ENCODE measurements at regions of chr20 and their contacts with region 1.

Region 1: GRCh38 chr20:50308513-50309279 is 118.1 kb downstream of the CEBPB start:
- DNase-seq: peak in 1 of 2 donors; percentile 98
- H3K4me3 ChIP-seq: no peak overlapping the region
- H3K27ac ChIP-seq: peak overlapping the region; percentile 91
- H3K4me1 ChIP-seq: peaks cover 76% of the 10 kb centered on the region
- H3K27me3 ChIP-seq: no peaks in the 10 kb centered on the region
- CTCF ChIP-seq: peak in 1 of 3 experiments; percentile 20
- POLR2A ChIP-seq: peak in 1 of 2 donors; percentile 74

Region 2: DNA sequence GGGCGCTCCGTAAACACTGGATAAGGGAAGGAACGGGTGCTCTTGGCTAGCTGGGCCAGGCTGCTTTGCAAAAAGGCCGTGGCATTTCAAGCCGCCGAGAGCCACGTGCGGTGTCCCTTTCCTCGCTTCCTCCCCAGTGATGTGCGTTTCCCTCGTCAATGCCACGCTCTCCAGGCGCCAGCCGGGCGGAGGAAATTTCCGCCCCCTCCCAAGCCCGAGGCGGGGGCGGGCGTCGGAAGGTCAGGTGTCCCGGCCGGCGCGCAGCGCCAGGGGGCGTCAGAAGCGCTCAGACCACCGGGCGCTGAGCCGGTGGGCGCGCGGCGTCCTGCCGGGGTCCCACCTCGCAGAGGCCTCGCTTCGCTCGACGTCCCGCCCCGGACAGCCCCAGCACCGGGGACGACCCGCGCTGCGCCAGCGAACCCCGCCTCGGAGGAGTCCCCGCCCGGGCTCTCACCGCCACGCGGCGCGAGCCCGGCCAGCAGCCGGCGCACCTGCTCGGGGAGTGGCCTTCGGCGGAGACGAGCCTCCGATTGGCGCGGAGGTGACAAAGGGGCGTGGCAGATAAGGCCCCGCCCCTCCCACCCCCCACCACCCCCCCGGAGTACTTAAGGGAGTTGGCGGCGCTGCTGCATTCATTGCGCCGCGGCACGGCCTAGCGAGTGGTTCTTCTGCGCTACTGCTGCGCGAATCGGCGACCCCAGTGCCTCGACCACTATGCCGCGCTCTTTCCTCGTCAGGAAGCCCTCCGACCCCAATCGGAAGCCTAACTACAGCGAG is 326.2 kb before region 1 on chr20 and contains the start of gene SNAI1:
- intact Hi-C with region 1: loop called (anchors 5 kb)
- DNase-seq: no peak
- H3K4me3 ChIP-seq: peak within 1 kb of the TSS; percentile 44 to 55
- H3K27ac ChIP-seq: peak within 1 kb of the TSS; percentile 55
- H3K4me1 ChIP-seq: peaks cover 58% of the 10 kb centered on the region
- H3K27me3 ChIP-seq: no peaks in the 10 kb centered on the region
- CTCF ChIP-seq: peak in 2 of 3 experiments; percentile 19 to 42
- POLR2A ChIP-seq: peak in 1 of 2 donors; percentile 76
- total RNA-seq, gene SNAI1: 19.9 TPM

Region 3: DNA sequence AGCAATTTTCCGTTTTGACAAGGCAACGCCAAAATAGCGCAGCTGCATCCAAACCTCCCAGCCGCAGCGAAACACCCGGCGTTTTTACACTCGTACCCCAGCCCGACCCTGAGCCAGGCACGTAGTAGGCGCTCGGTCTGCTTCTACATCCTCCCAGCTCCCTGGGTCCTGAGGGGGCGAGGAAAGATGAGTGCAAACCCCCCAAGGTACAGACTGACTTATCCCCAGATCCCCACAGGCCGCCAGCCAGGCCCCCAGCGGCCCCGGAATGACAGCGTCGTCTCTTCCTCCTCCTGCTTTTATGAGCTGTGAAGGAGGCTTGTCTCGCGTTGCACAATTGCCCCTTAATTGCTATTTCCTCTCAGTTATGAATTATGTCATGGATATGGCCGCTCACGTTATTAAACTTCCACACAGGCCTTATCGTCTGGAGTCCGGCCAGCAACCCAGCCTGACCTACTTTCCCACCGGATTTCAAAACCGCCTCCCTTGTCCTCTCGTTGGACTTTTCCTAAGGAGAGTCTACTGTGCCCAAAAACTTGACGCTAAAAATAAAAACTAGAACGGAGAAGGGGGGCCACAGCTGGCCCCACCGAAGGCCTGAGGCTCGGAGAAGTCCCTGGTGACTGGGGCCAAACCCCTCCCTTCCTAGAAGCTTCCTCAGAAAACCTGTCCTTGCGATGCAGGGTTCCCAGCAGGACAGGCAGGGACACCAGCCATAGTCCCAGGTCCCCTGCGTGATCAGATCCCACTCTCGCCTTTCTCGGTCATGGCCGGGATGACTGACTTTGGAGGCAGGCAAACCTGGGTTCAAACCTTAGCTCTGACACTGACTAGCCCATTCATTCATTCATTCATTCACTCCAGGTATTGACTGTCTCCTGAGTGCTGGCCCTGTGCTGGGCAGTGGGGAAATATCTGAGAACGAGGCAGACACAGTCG is 70.6 kb after region 1 on chr20:
- intact Hi-C with region 1: loop called (anchors 2 kb)
- DNase-seq: peak in 1 of 2 donors; percentile 99
- H3K4me3 ChIP-seq: peak overlapping the region; percentile 0 to 5
- H3K27ac ChIP-seq: peak overlapping the region; percentile 74
- H3K4me1 ChIP-seq: peaks cover 38% of the 10 kb centered on the region
- H3K27me3 ChIP-seq: no peaks in the 10 kb centered on the region
- CTCF ChIP-seq: no peak
- POLR2A ChIP-seq: peak in 1 of 2 donors; percentile 56

Region 4: DNA sequence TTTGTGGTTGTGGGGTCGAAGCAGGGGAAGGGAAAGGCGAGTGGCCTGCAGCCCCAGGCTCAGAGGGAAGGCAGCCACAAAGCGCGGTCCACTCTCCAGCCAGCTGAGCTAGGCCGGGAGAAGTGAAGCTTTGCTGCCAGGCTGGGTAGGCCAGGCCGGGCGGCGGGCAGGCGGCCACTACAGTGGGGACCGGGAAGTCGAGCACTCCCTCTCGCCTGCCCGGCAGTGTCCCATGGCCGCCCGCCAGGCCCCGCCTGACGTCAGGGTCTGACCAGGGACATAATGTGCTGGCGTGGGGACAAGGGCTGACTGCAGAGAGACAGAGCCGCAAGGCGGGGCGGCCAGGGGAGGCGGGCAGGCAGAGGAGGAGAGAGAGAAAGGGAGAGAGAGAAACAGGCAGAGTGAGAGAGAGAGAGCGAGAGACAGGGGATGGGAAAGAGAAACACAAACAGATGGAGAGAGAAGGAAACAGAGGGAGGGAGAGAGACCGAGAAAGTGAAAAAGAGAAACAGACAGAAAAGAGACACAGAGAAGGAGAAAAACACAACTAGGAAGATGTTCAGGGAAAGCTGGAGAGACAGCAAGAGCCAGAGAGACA is 106.9 kb after region 1 on chr20:
- intact Hi-C with region 1: loop called (anchors 10 kb)
- DNase-seq: peak in 1 of 2 donors; percentile 99
- H3K4me3 ChIP-seq: peak overlapping the region in 1 of 2 donors; percentile 27
- H3K27ac ChIP-seq: peak overlapping the region; percentile 98
- H3K4me1 ChIP-seq: peaks cover 35% of the 10 kb centered on the region
- H3K27me3 ChIP-seq: no peaks in the 10 kb centered on the region
- CTCF ChIP-seq: peak in 1 of 3 experiments; percentile 19
- POLR2A ChIP-seq: peak in 1 of 2 donors; percentile 48

Region 5: GRCh38 chr20:50450881-50451752 is 142.4 kb after region 1 on chr20:
- intact Hi-C with region 1: loop called (anchors 5 kb)
- DNase-seq: no peak
- H3K4me3 ChIP-seq: peak overlapping the region; percentile 2 to 17
- H3K27ac ChIP-seq: peak overlapping the region; percentile 90
- H3K4me1 ChIP-seq: peaks cover 28% of the 10 kb centered on the region
- H3K27me3 ChIP-seq: no peaks in the 10 kb centered on the region
- CTCF ChIP-seq: no peak
- POLR2A ChIP-seq: no peak

Region 6: DNA sequence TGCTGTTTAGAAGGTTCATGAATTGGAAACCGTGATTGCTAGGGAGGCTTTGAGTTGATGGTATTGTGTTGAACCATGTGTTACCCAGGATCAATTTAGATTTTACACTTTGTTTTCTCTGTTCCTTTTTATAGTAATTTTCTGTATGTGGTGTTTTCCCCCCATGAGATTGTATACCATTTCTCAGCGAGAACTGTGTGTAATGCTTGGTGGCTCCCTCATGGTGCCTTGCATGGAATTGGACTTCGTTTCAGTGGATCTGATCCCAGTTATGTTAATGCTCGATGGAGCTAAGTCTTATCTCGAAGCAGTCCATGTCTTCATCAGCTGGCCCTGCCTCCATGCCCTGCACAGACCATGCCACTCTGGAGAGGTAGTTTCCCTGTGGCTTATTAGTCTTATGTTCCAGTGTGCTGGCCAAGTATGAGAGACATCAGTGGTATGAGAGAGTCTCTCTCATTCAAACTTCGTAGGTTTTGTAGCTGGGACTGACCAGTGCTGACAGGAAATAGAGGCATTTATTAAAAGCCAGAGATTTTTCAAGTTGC is 220.2 kb after region 1 on chr20:
- intact Hi-C with region 1: no loop called
- DNase-seq: no peak
- H3K4me3 ChIP-seq: no peak overlapping the region
- H3K27ac ChIP-seq: no peak overlapping the region
- H3K4me1 ChIP-seq: peaks cover 83% of the 10 kb centered on the region
- H3K27me3 ChIP-seq: no peaks in the 10 kb centered on the region
- CTCF ChIP-seq: no peak
- POLR2A ChIP-seq: no peak

Region 7: DNA sequence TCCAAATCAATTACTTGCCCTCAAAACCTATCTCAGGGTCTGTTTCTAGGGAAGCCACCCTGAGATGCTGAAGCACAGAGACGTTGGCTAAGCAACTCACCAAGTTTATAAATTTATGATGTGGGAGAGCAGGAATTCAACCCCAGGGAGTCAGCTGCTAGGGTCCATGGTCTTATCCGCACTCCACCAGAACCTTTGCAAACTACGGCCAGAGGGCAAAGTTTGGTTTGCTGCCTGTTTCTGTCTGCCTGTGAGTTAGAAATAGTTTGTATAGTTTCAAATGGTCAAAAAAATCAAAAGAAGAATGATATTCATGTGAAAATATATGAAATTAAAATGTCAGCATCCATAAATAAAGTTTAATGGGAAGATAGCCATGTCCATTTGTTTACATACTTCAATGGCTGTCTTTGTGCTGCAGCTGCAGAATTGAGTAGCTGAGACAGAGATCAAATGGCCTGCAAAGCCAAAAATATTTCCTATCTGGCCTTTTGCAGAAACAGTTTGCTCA is 1966.5 kb after region 1 on chr20:
- intact Hi-C with region 1: no loop called
- DNase-seq: no peak
- H3K4me3 ChIP-seq: no peak overlapping the region
- H3K27ac ChIP-seq: no peak overlapping the region
- H3K4me1 ChIP-seq: no peaks in the 10 kb centered on the region
- H3K27me3 ChIP-seq: no peaks in the 10 kb centered on the region
- CTCF ChIP-seq: no peak
- POLR2A ChIP-seq: no peak

Measured in vagina (tissue), 2 donors.